AG04449 (cell line): ENCODE measurements at regions of chr12 and their contacts with region 1.

Region 1: GRCh38 chr12:51814311-51815088 is 34.0 kb downstream of the FIGNL2 start:
- DNase-seq: no peak
- H3K4me3 ChIP-seq: peak overlapping the region; percentile 52
- CTCF ChIP-seq: peak; percentile 84

Region 2: GRCh38 chr12:51531978-51532497 is 282.5 kb before region 1 on chr12:
- CTCF ChIA-PET with region 1: interaction called, 30 read pairs
- POLR2A ChIA-PET with region 1: no interaction called
- DNase-seq: peak; percentile 21
- H3K4me3 ChIP-seq: no peak overlapping the region
- CTCF ChIP-seq: peak; percentile 92

Region 3: GRCh38 chr12:51788876-51789275 is 25.6 kb before region 1 on chr12:
- CTCF ChIA-PET with region 1: interaction called, 21 read pairs
- POLR2A ChIA-PET with region 1: no interaction called
- DNase-seq: peak; percentile 71
- H3K4me3 ChIP-seq: no peak overlapping the region
- CTCF ChIP-seq: no peak

Region 4: DNA sequence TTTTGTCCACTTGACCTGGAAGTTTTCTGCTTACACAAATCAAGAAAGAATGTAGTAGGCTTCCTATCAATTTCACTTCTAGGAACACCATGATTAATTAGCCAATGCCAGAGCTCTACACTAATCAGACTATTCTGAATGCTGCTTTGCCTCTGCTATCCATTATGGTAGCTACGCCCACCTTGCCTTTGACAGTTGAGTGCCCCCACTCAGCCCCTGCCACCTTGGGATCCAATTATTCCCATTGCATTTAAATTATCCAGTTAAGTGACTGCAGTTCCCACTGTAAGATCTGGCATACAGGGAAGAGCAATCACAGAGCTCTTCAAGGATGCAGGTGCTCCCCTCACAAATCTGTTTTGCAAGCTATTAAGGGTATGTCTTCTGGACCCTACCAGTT is 13.5 kb before region 1 on chr12:
- CTCF ChIA-PET with region 1: interaction called, 14 read pairs
- POLR2A ChIA-PET with region 1: no interaction called
- DNase-seq: no peak
- H3K4me3 ChIP-seq: no peak overlapping the region
- CTCF ChIP-seq: no peak